ENCODE measurements at regions of chr3 and their contacts with region 1.

Region 1: DNA sequence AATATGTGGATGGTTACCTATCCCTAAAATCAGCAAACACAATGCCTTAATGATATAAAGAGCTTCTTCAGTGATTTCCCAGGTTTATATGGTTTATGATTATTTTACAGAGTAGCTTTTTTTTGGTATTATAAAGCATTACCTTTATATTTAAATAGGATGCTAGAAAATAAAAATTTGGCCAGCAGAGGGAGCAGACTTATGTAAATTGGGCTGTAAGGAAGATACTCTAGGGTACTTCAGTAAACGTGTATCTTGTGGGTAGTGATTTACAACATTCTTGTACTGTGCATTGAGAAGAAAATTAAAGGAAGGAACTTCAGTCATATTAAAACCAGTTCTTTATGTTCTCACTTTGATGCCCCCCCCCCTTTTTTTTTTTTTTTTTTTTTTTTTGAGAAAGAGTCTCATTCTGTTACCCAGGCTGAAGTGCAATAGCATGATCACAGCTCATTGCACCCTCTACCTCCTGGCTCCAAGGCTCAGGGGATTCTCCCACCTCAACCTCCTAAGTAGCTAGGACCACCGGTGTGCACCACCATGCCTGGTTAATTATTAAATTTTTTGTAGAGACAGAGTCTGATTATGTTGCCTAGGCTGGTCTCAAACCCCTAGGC is 167.9 kb downstream of the BBX start:
- DNase-seq: peak in 1 of 2 experiments; percentile 23
- H3K4me3 ChIP-seq: no peak overlapping the region
- H3K4me3 Mint-ChIP-seq: no peak overlapping the region
- H3K27ac Mint-ChIP-seq: no peak overlapping the region
- H3K4me1 ChIP-seq: no peaks in the 10 kb centered on the region
- H3K4me1 Mint-ChIP-seq: no peaks in the 10 kb centered on the region
- H3K27me3 ChIP-seq: no peaks in the 10 kb centered on the region
- H3K27me3 Mint-ChIP-seq: no peaks in the 10 kb centered on the region
- CTCF ChIP-seq: peak; percentile 42 to 56

Region 2: DNA sequence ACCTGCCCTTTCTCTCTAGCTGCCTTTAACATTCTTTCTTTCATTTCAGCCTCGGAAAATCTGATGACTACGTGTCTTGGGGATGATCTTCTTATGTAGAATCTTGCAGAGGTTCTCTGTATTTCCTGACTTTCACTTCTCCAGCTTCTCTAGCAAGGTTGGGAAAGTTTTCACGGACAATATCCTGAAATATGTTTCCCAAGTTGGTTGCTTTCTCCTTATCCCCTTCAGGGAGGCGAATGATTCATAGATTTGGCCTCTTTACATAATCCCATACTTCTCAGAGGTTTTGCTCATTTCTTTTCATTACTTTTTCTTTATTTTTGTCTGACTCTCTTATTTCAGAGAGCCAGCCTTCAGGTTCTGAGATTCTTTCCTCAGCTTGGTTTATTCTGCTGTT is 375.5 kb before region 1 on chr3:
- CTCF ChIA-PET with region 1: interaction called, 10 read pairs
- POLR2A ChIA-PET with region 1: no interaction called
- intact Hi-C with region 1: no loop called
- DNase-seq: no peak
- H3K4me3 ChIP-seq: no peak overlapping the region
- H3K4me3 Mint-ChIP-seq: no peak overlapping the region
- H3K27ac Mint-ChIP-seq: no peak overlapping the region
- H3K4me1 ChIP-seq: no peaks in the 10 kb centered on the region
- H3K4me1 Mint-ChIP-seq: no peaks in the 10 kb centered on the region
- H3K27me3 ChIP-seq: no peaks in the 10 kb centered on the region
- H3K27me3 Mint-ChIP-seq: peaks cover 3% of the 10 kb centered on the region
- CTCF ChIP-seq: no peak

Region 3: DNA sequence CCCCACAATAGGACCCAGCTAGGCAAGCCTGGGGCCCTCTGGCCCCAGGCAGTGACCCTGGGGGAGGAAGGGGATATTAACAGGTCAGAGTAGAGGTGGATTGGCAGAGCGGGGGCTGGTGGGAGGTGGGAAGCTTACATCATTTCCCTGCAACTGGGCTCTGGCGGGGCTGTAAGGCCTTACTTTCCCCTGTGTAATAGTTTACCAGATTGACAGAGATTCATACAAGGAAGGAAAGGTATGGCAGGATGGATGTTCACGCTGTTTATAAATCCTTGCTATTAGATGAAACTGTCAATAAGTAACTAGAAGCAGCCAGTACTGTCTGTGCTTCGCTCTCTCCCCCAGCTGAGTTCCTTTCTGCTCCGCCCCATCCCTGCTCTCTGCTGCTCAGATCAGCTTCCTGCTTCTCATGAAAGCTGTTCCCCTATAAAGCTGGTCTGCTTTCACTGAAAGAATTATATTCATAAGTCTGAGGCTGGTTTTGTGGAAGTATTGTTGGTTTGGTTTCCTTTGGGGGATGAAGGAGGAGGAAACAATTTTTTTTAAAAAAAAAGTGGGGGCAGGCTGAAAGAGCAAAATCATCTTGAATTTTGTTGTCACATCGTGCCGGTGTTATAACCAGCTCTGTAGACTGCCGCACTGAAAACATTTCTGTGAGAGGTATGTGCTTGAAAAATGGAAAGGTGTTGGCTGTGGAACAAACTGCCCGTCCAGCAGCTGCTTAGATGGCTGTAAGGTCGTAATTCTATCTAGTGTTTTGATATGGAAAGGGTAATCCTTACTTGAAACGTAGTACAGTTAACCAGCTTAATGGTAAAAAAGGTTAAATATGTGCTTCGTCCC is 91.5 kb before region 1 on chr3:
- CTCF ChIA-PET with region 1: no interaction called
- POLR2A ChIA-PET with region 1: no interaction called
- intact Hi-C with region 1: no loop called
- DNase-seq: peak in 1 of 2 experiments; percentile 27
- H3K4me3 ChIP-seq: no peak overlapping the region
- H3K4me3 Mint-ChIP-seq: peak overlapping the region; percentile 45
- H3K27ac Mint-ChIP-seq: no peak overlapping the region
- H3K4me1 ChIP-seq: 0 out of 2 replicates have a peak, but pooled peaks cover 5% of the 10 kb centered on the region
- H3K4me1 Mint-ChIP-seq: no peaks in the 10 kb centered on the region
- H3K27me3 ChIP-seq: no peaks in the 10 kb centered on the region
- H3K27me3 Mint-ChIP-seq: peaks cover 2% of the 10 kb centered on the region
- CTCF ChIP-seq: no peak

Region 4: DNA sequence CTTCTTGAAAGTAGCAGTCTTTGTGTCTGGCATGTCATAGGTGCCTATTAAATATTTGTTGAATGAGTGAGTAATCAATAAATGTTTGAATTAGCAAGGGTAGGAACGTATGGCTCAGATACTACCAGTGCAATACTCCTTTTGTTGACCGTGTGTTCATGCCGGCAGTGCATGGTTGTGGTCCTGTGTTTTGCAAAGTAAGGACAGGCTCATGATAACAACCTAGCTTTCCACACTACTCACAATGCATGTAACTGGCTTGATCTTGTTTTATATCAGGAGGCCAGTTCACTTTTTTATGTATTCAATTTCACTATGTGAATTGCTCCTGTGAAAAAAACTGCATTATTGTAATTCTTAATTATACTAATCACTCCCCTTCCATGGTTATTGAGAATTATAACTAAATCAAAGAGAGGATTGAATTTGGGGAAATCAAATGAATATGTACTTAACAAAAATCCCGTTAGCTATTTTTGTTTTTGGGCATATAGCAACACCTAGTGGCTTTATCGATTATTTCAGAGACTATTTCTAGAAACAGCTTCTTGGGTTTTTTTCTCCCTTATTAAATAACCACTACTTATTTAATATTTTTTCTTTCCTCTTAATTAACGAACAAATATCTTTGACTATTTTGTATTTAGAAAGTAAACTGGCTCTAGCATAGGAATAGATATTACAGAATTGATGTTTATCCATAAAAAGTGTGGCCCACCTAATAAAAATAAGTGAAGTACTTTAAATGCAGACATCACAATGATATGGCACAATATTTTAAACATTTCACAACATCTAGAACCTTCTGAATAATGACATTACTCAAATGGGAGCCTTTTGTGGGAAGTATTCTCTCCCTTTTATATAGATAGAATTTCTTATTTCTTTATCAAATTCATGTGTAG is 50.6 kb after region 1 on chr3:
- CTCF ChIA-PET with region 1: interaction called, 4 read pairs
- POLR2A ChIA-PET with region 1: no interaction called
- intact Hi-C with region 1: loop called (anchors 1 kb)
- DNase-seq: no peak
- H3K4me3 ChIP-seq: no peak overlapping the region
- H3K4me3 Mint-ChIP-seq: no peak overlapping the region
- H3K27ac Mint-ChIP-seq: no peak overlapping the region
- H3K4me1 ChIP-seq: no peaks in the 10 kb centered on the region
- H3K4me1 Mint-ChIP-seq: no peaks in the 10 kb centered on the region
- H3K27me3 ChIP-seq: no peaks in the 10 kb centered on the region
- H3K27me3 Mint-ChIP-seq: peaks cover 14% of the 10 kb centered on the region
- CTCF ChIP-seq: peak; percentile 41 to 43